OCI-LY7 (cell line): ENCODE measurements at regions of chr20 and their contacts with region 1.

Region 1: GRCh38 chr20:16069389-16070010 is 503.7 kb downstream of the KIF16B start:
- DNase-seq: peak; percentile 25
- H3K4me3 ChIP-seq: no peak overlapping the region
- H3K27ac ChIP-seq: peak overlapping the region; percentile 11
- H3K4me1 ChIP-seq: peaks cover 44% of the 10 kb centered on the region
- CTCF ChIP-seq: no peak

Region 2: DNA sequence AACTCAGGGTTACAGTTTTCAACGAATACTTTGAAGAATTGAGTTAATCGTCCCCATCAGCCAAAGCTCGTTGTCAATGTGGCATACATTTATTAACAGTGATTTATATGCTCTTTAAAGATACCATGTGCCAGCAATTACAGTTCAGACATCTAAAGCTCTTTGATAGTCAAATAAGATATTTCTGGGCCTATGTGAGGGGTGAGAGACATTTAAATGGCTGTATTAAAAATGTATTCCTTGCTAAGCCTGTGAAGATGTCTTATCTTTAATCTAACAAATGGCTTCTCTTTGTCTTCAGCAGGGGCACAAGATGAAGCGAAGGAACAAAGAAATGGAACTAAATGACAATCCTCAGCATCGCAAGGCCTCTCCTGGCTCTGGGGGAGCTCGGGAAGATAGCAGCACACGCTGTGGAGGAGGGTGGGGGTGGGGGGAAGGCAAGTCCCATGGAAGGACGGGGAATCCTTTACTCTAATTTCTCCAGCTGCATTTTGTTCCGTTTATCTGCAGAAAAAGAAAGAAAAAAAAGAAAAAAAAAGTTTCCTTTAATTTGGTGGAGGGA is 19.9 kb before region 1 on chr20:
- CTCF ChIA-PET with region 1: interaction called, 4 read pairs
- POLR2A ChIA-PET with region 1: interaction called, 12 read pairs
- intact Hi-C with region 1: no loop called
- DNase-seq: no peak
- H3K4me3 ChIP-seq: no peak overlapping the region
- H3K27ac ChIP-seq: no peak overlapping the region
- H3K4me1 ChIP-seq: peaks cover 37% of the 10 kb centered on the region
- CTCF ChIP-seq: no peak

Region 3: GRCh38 chr20:16054985-16055384 is 14.5 kb before region 1 on chr20:
- CTCF ChIA-PET with region 1: interaction called, 4 read pairs
- POLR2A ChIA-PET with region 1: interaction called, 12 read pairs
- intact Hi-C with region 1: no loop called
- DNase-seq: no peak
- H3K4me3 ChIP-seq: no peak overlapping the region
- H3K27ac ChIP-seq: no peak overlapping the region
- H3K4me1 ChIP-seq: peaks cover 28% of the 10 kb centered on the region
- CTCF ChIP-seq: no peak

Region 4: DNA sequence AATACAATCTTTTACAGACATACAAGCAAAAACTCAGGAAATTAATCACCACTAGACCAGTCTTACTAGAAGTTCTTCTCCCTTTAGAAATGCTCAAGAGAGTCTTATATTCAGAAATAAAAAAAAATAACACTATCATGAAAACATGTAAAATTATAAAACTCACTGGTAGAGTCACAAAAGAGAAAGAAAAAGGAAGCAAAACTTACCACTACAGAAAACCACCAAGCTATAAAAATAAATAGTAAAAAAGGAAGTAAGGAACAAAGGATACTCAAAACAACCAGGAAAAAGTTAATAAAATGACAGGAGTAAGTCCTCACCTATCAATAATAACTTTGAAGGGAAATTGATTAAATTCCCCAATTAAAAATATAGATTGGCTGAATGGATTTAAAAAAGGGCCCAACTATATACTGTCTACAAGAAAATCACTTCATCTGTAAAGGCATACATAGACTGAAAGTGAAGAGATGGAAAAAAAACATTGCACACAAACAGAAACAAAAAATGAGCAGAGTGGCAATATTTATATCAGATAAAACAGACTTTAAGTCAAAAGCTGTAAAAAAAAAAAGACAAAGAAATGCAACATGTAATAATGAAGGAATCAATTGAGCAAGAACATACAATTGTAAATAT is 14.3 kb after region 1 on chr20:
- CTCF ChIA-PET with region 1: no interaction called
- POLR2A ChIA-PET with region 1: interaction called, 15 read pairs
- intact Hi-C with region 1: no loop called
- DNase-seq: no peak
- H3K4me3 ChIP-seq: no peak overlapping the region
- H3K27ac ChIP-seq: peak overlapping the region; percentile 18
- H3K4me1 ChIP-seq: peaks cover 30% of the 10 kb centered on the region
- CTCF ChIP-seq: no peak

Region 5: GRCh38 chr20:16621435-16622141 is 552.1 kb after region 1 on chr20:
- CTCF ChIA-PET with region 1: no interaction called
- POLR2A ChIA-PET with region 1: no interaction called
- intact Hi-C with region 1: no loop called
- DNase-seq: no peak
- H3K4me3 ChIP-seq: no peak overlapping the region
- H3K27ac ChIP-seq: no peak overlapping the region
- H3K4me1 ChIP-seq: no peaks in the 10 kb centered on the region
- CTCF ChIP-seq: no peak